ENCODE measurements at regions of chr3 and their contacts with region 1.

Region 1: GRCh38 chr3:4493014-4493940 is at the start of gene ITPR1:
- DNase-seq: peak; percentile 99 to 100 (median 100)
- H3K4me3 ChIP-seq: peak within 1 kb of the TSS; percentile 83 to 97 (median 95)
- H3K27ac ChIP-seq: peak within 1 kb of the TSS; percentile 92 to 95
- H3K4me1 ChIP-seq: peaks cover 22 to 42% (median 37%) of the 10 kb centered on the region in 4 experiments
- H3K27me3 ChIP-seq: no peaks in the 10 kb centered on the region

Region 2: DNA sequence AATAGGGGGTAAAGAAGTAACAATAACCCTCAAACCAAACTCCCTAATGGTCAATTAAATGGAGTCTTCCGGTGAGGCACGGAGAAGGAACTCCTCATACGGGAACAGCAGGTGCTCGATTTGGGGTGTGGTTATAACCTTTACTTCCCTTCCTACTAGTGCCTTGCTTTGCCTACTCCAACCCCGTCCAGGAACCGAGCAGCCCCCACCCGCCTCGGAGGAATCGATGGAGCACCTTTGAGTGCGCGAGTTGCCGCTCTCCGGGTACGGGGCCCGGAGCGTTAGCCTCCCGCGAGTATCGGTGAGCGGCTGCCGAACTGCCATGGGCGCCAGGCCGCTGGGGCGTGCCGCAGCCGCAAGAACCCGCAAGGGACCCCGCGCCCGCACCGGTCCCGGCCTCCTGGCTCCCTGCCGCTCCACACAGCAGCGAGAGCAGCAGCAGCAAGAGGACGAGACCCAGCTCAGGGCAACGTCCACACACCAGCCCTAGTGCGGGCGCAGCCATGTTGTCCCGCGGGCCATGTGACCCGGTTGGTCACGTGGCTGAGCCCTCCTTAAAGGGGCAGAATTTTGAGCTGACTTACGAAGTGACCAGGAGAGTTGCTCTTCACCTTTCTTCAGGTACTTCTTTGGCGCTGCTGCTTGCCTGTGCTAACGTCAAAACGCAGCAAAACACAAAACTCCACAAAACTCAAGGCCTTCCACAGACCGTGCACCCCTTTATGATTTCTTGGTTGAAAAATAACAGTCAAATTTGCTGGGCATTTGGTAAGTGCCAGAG is 26.3 kb before region 1 on chr3 and contains the start of gene SUMF1:
- CTCF ChIA-PET with region 1: interaction called, 6 read pairs
- POLR2A ChIA-PET with region 1: interaction called, 10 read pairs
- DNase-seq: peak; percentile 55 to 76 (median 68)
- H3K4me3 ChIP-seq: peak within 1 kb of the TSS; percentile 84 to 97 (median 92)
- H3K27ac ChIP-seq: peak within 1 kb of the TSS; percentile 74 to 92
- H3K4me1 ChIP-seq: peaks cover 6 to 20% (median 16%) of the 10 kb centered on the region in 4 experiments
- H3K27me3 ChIP-seq: no peaks in the 10 kb centered on the region

Region 3: GRCh38 chr3:4504340-4505261 is 11.3 kb after region 1 on chr3:
- CTCF ChIA-PET with region 1: interaction called, 7 read pairs
- POLR2A ChIA-PET with region 1: interaction called, 41 read pairs
- DNase-seq: peak; percentile 67 to 74 (median 73)
- H3K4me3 ChIP-seq: peak overlapping the region in 6 of 7 experiments; percentile 48 to 68 (median 53)
- H3K27ac ChIP-seq: peak overlapping the region; percentile 18 to 82
- H3K4me1 ChIP-seq: peaks cover 39 to 69% (median 57%) of the 10 kb centered on the region in 4 experiments
- H3K27me3 ChIP-seq: no peaks in the 10 kb centered on the region

Region 4: GRCh38 chr3:4571690-4572334 is 78.5 kb after region 1 on chr3:
- CTCF ChIA-PET with region 1: interaction called, 23 read pairs
- POLR2A ChIA-PET with region 1: interaction called, 9 read pairs
- DNase-seq: peak; percentile 58 to 73 (median 66)
- H3K4me3 ChIP-seq: no peak overlapping the region
- H3K27ac ChIP-seq: no peak overlapping the region
- H3K4me1 ChIP-seq: peaks cover 0 to 13% (median 10%) of the 10 kb centered on the region in 4 experiments
- H3K27me3 ChIP-seq: no peaks in the 10 kb centered on the region

Region 5: DNA sequence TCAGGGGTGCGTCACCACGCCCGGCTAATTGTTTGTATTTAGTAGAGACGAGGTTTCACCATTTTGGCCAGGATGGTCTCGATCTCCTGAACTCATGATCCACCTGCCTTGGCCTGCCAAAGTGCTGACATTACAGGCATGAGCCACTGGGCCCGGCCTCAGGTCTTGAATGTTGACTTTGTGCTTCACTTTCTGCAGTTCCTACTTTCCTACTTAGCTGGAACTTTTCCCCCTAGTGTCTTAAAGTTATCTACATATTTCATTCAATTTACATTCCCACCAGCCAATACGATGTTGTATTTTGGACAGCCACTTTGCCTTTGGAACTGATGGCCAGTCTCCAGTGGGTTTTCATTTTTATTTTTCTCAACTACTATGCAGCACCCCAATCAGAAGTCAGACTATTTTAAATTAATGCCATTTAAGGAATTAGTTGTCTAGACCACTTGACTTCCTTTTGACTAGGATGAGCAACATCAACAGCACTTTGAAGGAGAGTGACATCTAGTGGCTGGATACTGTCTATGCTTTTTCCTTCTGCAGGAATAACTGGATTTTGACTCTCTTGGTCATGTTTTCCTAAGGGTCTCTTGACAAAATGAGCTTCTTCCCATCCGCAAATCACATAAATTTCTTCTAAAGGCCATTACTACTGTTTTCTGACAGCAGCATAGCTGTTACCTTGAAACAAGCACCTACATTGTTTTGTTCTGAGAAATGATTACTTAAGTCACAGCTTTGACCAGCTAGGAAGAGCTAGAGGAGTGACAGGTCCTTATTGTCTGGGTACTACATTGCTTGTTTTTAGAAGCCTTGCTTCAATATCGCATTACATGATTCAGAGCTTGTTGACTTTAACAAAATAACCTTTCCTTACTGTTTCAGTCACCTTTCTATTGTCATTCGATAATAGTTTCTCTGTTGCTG is 140.1 kb after region 1 on chr3:
- CTCF ChIA-PET with region 1: interaction called, 10 read pairs
- POLR2A ChIA-PET with region 1: no interaction called
- DNase-seq: peak; percentile 68 to 81 (median 81)
- H3K4me3 ChIP-seq: no peak overlapping the region
- H3K27ac ChIP-seq: no peak overlapping the region
- H3K4me1 ChIP-seq: peaks cover 0 to 4% (median 0%) of the 10 kb centered on the region in 4 experiments
- H3K27me3 ChIP-seq: no peaks in the 10 kb centered on the region